Ovary (tissue), 10 donors: ENCODE measurements at regions of chr13 and their contacts with region 1.

Region 1: DNA sequence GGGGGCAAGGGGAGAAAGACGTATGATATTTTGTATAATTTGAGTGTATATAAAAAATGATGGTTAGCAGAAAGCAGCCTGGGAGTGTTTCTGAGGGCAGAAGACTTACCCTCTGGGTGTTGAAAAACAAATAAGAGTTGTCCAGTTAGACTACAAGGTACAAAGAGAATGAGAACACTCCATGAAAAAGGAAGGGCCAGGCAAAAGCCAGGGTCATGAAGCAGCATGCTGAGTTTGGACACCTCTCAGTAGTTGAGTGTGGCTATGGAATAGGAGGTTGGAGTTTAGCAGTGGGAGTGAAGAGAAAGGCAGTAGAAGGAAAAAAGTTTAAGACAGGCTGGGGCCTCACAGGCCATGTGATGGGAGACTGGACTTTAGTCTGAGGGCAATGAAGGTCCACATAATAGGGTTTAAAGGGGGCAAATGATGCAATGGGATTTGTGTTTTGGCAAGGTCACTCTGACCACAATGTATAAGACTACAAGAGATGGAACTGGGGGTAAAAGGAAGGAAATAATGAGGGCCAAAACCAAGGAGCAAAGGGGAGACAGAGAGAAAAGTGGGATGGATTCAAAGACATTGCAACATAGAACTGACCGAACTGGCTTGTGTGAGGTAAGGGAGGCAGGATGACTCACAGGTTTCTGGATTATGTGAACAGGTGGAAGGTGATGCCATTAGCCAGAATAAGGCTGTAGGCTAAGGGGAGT is 76.5 kb downstream of the SERP2 start:
- DNase-seq: no peak
- H3K4me3 ChIP-seq: no peak overlapping the region
- H3K27ac ChIP-seq: no peak overlapping the region
- H3K4me1 ChIP-seq: no peaks in the 10 kb centered on the region
- H3K27me3 ChIP-seq: no peaks in the 10 kb centered on the region
- CTCF ChIP-seq: no peak
- EP300 ChIP-seq: no peak
- POLR2A ChIP-seq: no peak

Region 2: GRCh38 chr13:43915451-43915850 is 534.7 kb before region 1 on chr13:
- intact Hi-C with region 1: loop called in 2 of 4 experiments (anchors 10 kb)
- DNase-seq: no peak
- H3K4me3 ChIP-seq: no peak overlapping the region
- H3K27ac ChIP-seq: no peak overlapping the region
- H3K4me1 ChIP-seq: no peaks in the 10 kb centered on the region
- H3K27me3 ChIP-seq: no peaks in the 10 kb centered on the region
- CTCF ChIP-seq: no peak
- EP300 ChIP-seq: no peak
- POLR2A ChIP-seq: no peak